ENCODE measurements at regions of chr13 and their contacts with region 1.

Region 1: GRCh38 chr13:22717036-22717435 is 463.7 kb upstream of the SGCG start:
- DNase-seq: no peak
- H3K4me3 ChIP-seq: no peak overlapping the region
- H3K27ac ChIP-seq: no peak overlapping the region
- H3K4me1 ChIP-seq: peaks cover 3% of the 10 kb centered on the region
- H3K27me3 ChIP-seq: no peaks in the 10 kb centered on the region
- CTCF ChIP-seq: no peak
- EP300 ChIP-seq: no peak
- POLR2A ChIP-seq: no peak

Region 2: DNA sequence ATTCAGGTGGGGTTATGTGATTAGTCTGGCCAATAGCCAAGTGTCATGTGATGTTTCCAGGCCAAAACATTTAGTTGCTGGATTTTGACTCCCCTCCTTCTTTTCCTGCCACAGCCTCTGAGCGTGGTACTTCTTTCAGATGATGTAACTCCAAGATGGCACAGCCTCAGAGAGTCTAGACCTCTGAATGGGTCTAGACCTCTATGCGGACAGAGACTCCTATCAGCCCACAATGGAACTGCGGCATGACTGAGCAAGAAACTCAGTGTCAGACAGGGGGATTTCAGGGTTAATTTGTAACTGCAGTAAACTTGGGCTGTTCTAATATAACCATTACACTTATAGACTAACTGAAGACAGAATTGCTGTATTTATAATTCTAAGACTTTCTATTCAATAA is 1215.3 kb before region 1 on chr13:
- intact Hi-C with region 1: no loop called
- DNase-seq: no peak
- H3K4me3 ChIP-seq: no peak overlapping the region
- H3K27ac ChIP-seq: no peak overlapping the region
- H3K4me1 ChIP-seq: no peaks in the 10 kb centered on the region
- H3K27me3 ChIP-seq: no peaks in the 10 kb centered on the region
- CTCF ChIP-seq: no peak
- EP300 ChIP-seq: no peak
- POLR2A ChIP-seq: no peak

Region 3: DNA sequence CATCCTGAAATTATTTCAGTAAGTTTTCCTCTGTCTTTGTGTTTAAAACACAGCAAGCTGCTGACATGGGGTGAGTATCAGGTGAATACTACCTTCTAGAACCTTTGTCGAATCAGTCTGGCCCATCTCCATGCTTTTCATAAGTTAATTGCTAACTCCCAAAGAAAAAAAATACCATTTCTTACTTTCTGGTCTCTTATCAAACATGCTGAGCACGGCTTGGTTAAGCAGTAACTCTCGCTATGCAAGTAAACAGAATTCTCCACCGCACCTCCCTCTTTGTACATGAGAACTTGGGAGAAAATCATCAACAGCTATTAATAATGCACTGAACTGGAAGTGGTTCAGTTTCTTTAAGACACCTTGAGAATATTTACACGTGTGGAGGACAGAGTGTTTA is 957.6 kb before region 1 on chr13:
- intact Hi-C with region 1: no loop called
- DNase-seq: no peak
- H3K4me3 ChIP-seq: no peak overlapping the region
- H3K27ac ChIP-seq: no peak overlapping the region
- H3K4me1 ChIP-seq: peaks cover 2% of the 10 kb centered on the region
- H3K27me3 ChIP-seq: no peaks in the 10 kb centered on the region
- CTCF ChIP-seq: no peak
- EP300 ChIP-seq: no peak
- POLR2A ChIP-seq: no peak

Region 4: GRCh38 chr13:22703601-22704209 is 13.3 kb before region 1 on chr13:
- intact Hi-C with region 1: loop called in 1 of 4 experiments (anchors 2 kb)
- DNase-seq: no peak
- H3K4me3 ChIP-seq: no peak overlapping the region
- H3K27ac ChIP-seq: no peak overlapping the region
- H3K4me1 ChIP-seq: no peaks in the 10 kb centered on the region
- H3K27me3 ChIP-seq: no peaks in the 10 kb centered on the region
- CTCF ChIP-seq: no peak
- EP300 ChIP-seq: no peak
- POLR2A ChIP-seq: no peak

Measured in ovary (tissue), 10 donors.